ENCODE measurements at regions of chr11 and their contacts with region 1.

Region 1: DNA sequence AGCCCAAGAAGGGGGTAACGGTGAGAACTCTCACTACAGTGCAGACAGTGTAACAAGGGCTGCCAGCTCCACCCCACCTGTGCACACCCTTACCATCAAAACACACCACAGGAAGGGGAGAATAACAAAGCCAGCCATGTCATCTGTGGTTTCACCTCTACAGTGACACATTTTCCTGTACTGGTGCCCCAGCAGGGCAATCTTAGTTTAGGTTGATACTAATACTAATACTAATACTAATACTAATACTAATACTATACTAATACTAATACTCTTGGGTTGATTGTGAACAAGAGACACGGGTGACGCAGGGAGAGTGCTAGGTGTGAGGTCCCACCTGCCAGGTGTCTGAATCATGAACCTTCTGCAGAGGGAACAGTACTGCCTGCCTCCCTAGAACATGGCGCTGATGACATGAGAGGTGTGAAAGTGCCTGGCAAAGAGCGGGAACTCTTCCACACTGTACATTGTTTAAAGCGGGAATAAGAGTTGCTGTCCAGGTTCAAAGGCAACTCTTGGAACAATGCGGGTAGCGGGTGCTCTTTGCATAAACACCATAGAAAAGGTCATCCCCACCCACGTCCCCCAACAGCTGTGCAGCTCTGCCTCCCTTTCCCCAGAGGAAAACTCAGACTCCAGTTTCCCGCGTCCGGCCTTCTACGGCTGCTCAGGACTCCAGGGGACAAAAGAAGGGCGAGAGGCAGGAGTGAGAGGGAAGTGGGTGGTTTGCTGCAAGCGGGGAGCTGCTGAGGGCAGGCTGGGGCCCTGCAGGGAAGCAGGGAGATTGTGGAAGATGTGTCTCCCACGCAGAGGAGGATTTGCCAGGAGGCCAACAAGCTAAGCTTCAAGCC is 25.0 kb upstream of the TMPRSS4 start:
- DNase-seq: peak; percentile 55 to 88 (median 86)
- H3K4me3 ChIP-seq: peak overlapping the region; percentile 44
- H3K4me3 Mint-ChIP-seq: peak overlapping the region; percentile 6 to 87 (median 69)
- H3K27ac ChIP-seq: peak overlapping the region; percentile 29
- H3K27ac Mint-ChIP-seq: peak overlapping the region; percentile 88 to 99 (median 97)
- H3K4me1 ChIP-seq: peaks cover 63% of the 10 kb centered on the region
- H3K4me1 Mint-ChIP-seq: peaks cover 60 to 67% (median 65%) of the 10 kb centered on the region in 3 donors
- H3K27me3 ChIP-seq: no peaks in the 10 kb centered on the region
- H3K27me3 Mint-ChIP-seq: peaks cover 0 to 3% of the 10 kb centered on the region in 2 donors

Region 2: DNA sequence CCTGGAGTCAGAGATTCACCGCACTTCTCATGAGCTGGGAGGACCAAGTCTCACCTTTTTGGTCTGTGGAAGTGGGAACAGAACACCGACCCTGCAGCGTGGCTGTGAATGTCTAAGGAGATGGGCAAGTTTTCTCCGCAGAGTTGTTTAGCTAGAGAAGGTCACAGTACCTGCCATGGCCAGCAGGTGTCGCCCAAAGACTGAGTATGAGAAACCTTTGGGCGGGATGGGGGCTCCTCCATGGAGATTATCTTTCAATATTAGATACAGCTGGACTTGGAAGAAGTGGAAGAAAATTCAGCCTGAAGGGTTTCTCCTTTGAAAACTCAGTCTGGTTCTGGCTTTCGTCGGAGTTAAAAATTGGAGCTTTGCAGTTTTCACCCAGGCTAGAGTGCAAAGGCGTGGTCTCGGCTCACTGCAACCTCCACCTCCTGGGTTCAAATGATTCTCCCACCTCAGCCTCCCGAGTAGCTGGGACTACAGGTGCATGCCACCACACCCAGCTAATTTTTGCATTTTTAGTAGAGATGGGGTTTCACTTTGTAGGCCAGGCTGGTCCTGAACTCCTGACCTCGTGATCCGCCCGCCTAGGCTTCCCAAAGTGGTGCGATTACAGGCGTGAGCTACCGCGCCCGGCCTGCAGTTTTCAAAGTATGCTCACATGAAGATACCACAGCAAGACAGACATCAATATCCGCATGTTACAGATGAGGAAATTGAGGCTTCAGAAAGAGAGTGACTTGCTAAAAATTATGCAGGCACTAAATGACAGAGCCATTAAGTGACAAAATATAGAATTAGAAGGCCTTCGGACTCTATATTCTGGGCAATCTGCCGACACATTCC is 244.1 kb before region 1 on chr11:
- CTCF ChIA-PET with region 1: interaction called, 56 read pairs
- POLR2A ChIA-PET with region 1: no interaction called
- DNase-seq: peak; percentile 48 to 82 (median 73)
- H3K4me3 ChIP-seq: no peak overlapping the region
- H3K4me3 Mint-ChIP-seq: no peak overlapping the region
- H3K27ac ChIP-seq: no peak overlapping the region
- H3K27ac Mint-ChIP-seq: peak overlapping the region in 3 of 8 donors; percentile 33 to 92 (median 71)
- H3K4me1 ChIP-seq: peaks cover 4% of the 10 kb centered on the region
- H3K4me1 Mint-ChIP-seq: peaks cover 7 to 13% (median 11%) of the 10 kb centered on the region in 3 donors
- H3K27me3 ChIP-seq: no peaks in the 10 kb centered on the region
- H3K27me3 Mint-ChIP-seq: peaks cover 0 to 2% of the 10 kb centered on the region in 2 donors

Region 3: GRCh38 chr11:117828611-117829368 is 223.0 kb before region 1 on chr11:
- CTCF ChIA-PET with region 1: interaction called, 87 read pairs
- POLR2A ChIA-PET with region 1: interaction called, 8 read pairs
- DNase-seq: peak; percentile 51 to 95 (median 71)
- H3K4me3 ChIP-seq: no peak overlapping the region
- H3K4me3 Mint-ChIP-seq: peak overlapping the region; percentile 7 to 89 (median 57)
- H3K27ac ChIP-seq: peak overlapping the region; percentile 21
- H3K27ac Mint-ChIP-seq: peak overlapping the region; percentile 88 to 97 (median 94)
- H3K4me1 ChIP-seq: peaks cover 46% of the 10 kb centered on the region
- H3K4me1 Mint-ChIP-seq: peaks cover 65 to 83% (median 67%) of the 10 kb centered on the region in 3 donors
- H3K27me3 ChIP-seq: no peaks in the 10 kb centered on the region
- H3K27me3 Mint-ChIP-seq: peaks cover 0 to 2% of the 10 kb centered on the region in 2 donors

Region 4: GRCh38 chr11:117946842-117947526 is 104.9 kb before region 1 on chr11:
- CTCF ChIA-PET with region 1: interaction called, 232 read pairs
- POLR2A ChIA-PET with region 1: interaction called, 26 read pairs
- DNase-seq: peak; percentile 66 to 86 (median 78)
- H3K4me3 ChIP-seq: no peak overlapping the region
- H3K4me3 Mint-ChIP-seq: peak overlapping the region; percentile 0 to 66 (median 50)
- H3K27ac ChIP-seq: no peak overlapping the region
- H3K27ac Mint-ChIP-seq: peak overlapping the region; percentile 43 to 95 (median 72)
- H3K4me1 ChIP-seq: peaks cover 58% of the 10 kb centered on the region
- H3K4me1 Mint-ChIP-seq: peaks cover 53 to 76% (median 76%) of the 10 kb centered on the region in 3 donors
- H3K27me3 ChIP-seq: no peaks in the 10 kb centered on the region
- H3K27me3 Mint-ChIP-seq: peaks cover 0 to 3% of the 10 kb centered on the region in 2 donors

Region 5: GRCh38 chr11:117985953-117986887 is 65.6 kb before region 1 on chr11 and contains the start of gene IL10RA:
- CTCF ChIA-PET with region 1: interaction called, 155 read pairs
- POLR2A ChIA-PET with region 1: interaction called, 31 read pairs
- DNase-seq: peak; percentile 78 to 88 (median 82)
- H3K4me3 ChIP-seq: peak within 1 kb of the TSS; percentile 100
- H3K4me3 Mint-ChIP-seq: peak within 1 kb of the TSS; percentile 90 to 97 (median 93)
- H3K27ac ChIP-seq: peak within 1 kb of the TSS; percentile 98
- H3K27ac Mint-ChIP-seq: peak within 1 kb of the TSS; percentile 85 to 99 (median 92)
- H3K4me1 ChIP-seq: peaks cover 63% of the 10 kb centered on the region
- H3K4me1 Mint-ChIP-seq: peaks cover 53 to 71% (median 63%) of the 10 kb centered on the region in 3 donors
- H3K27me3 ChIP-seq: no peaks in the 10 kb centered on the region
- H3K27me3 Mint-ChIP-seq: no peaks in the 10 kb centered on the region
- total RNA-seq, gene IL10RA: 120 to 122 TPM

Region 6: DNA sequence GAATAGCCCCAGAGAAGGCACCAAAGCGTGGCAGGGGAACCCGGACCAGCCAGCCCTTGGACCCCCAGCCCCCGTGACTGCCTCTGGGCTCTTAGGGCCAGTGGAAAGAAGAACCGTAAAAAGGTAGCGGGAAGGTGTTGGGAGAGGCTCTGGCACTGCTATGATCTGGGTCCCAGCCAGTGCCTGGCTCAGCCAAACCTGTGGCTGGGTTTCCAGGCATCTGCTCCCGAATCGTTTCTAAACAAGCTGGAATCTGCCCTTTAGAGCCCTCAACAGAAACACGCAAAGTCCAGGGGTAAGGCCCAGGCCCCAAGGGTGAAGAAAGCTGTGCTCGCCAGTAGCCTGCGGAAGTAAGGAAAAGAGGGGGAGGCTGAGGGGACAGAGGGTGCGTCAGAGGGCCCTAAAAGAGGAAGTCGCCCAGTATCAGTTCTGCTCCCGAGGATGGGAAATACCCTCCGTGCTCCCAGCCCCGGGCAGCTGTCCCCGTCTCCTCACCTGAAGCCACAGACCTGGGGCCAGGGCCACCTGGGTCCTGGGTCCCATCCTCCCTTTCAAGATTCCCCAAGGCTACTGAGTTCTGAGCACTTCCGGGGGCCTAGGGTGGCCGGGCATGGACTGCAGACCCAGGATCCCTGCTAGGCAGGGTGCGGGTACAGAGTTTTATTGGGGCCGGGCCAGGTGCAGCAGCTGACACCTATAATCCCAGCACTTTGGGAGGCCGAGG is 40.9 kb before region 1 on chr11:
- CTCF ChIA-PET with region 1: interaction called, 141 read pairs
- POLR2A ChIA-PET with region 1: interaction called, 158 read pairs
- DNase-seq: no peak
- H3K4me3 ChIP-seq: no peak overlapping the region
- H3K4me3 Mint-ChIP-seq: peak overlapping the region in 1 of 7 donors; percentile 70
- H3K27ac ChIP-seq: no peak overlapping the region
- H3K27ac Mint-ChIP-seq: peak overlapping the region; percentile 69 to 100 (median 91)
- H3K4me1 ChIP-seq: peaks cover 100% of the 10 kb centered on the region
- H3K4me1 Mint-ChIP-seq: peaks cover 98 to 100% (median 100%) of the 10 kb centered on the region in 3 donors
- H3K27me3 ChIP-seq: no peaks in the 10 kb centered on the region
- H3K27me3 Mint-ChIP-seq: no peaks in the 10 kb centered on the region

Region 7: GRCh38 chr11:118078911-118079411 is 27.1 kb after region 1 on chr11:
- CTCF ChIA-PET with region 1: interaction called, 11 read pairs
- POLR2A ChIA-PET with region 1: no interaction called
- DNase-seq: no peak
- H3K4me3 ChIP-seq: no peak overlapping the region
- H3K4me3 Mint-ChIP-seq: peak overlapping the region in 3 of 7 donors; percentile 8 to 69 (median 34)
- H3K27ac ChIP-seq: no peak overlapping the region
- H3K27ac Mint-ChIP-seq: peak overlapping the region in 4 of 8 donors; percentile 17 to 71 (median 59)
- H3K4me1 ChIP-seq: no peaks in the 10 kb centered on the region
- H3K4me1 Mint-ChIP-seq: peaks cover 5 to 39% (median 7%) of the 10 kb centered on the region in 3 donors
- H3K27me3 ChIP-seq: no peaks in the 10 kb centered on the region
- H3K27me3 Mint-ChIP-seq: peaks cover 5 to 31% of the 10 kb centered on the region in 2 donors